Ascending aorta (tissue), 2 donors: ENCODE measurements at regions of chr2 and their contacts with region 1.

Region 1: GRCh38 chr2:62014102-62014501 is 108.6 kb downstream of the COMMD1 start:
- DNase-seq: peak; percentile 19 to 92
- H3K4me3 ChIP-seq: no peak overlapping the region
- H3K27ac ChIP-seq: peak overlapping the region; percentile 49 to 52
- H3K4me1 ChIP-seq: peaks cover 3 to 4% of the 10 kb centered on the region in 2 donors
- H3K27me3 ChIP-seq: no peaks in the 10 kb centered on the region
- CTCF ChIP-seq: peak in 2 of 3 experiments; percentile 14 to 20

Region 2: GRCh38 chr2:61970807-61971556 is 43.1 kb before region 1 on chr2:
- intact Hi-C with region 1: loop called (anchors 5 kb)
- DNase-seq: no peak
- H3K4me3 ChIP-seq: peak overlapping the region; percentile 28 to 60
- H3K27ac ChIP-seq: peak overlapping the region; percentile 68 to 69
- H3K4me1 ChIP-seq: peaks cover 0 to 16% of the 10 kb centered on the region in 2 donors
- H3K27me3 ChIP-seq: no peaks in the 10 kb centered on the region
- CTCF ChIP-seq: peak in 2 of 3 experiments; percentile 18 to 37

Region 3: DNA sequence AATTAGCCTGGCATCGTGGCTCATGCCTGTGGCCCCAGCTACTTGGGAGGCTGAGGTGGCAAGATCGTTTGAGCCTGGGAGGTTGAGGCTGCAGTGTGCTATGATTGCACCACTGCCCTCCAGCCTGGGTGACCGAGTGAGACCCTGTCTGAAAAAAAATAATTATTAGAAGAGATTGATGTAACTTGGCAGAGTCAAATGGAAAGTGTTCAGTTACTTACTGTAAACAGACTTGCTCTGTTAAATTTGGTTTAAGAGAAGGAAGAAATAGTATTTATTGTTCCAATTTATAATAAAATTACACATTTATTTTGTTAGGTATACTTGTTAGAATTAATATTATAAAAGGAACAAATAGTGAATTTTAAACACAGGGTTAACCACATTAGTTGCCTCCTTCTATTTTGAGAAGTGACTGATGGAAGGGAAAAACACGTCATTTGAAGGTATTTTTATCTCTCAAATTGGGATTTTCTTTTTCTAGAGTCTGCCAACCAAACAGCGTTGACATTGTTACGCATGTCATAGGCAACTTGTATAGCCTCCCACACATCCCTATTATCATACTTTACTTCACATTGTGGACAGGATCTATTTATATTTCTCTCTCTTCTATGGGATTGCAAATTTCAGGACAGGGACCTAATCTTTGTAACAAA is 63.0 kb after region 1 on chr2:
- intact Hi-C with region 1: loop called (anchors 5 kb)
- DNase-seq: no peak
- H3K4me3 ChIP-seq: no peak overlapping the region
- H3K27ac ChIP-seq: peak overlapping the region in 1 of 2 donors; percentile 23
- H3K4me1 ChIP-seq: peaks cover 0 to 7% of the 10 kb centered on the region in 2 donors
- H3K27me3 ChIP-seq: no peaks in the 10 kb centered on the region
- CTCF ChIP-seq: no peak